Transverse colon (tissue), 4 donors: ENCODE measurements at regions of chr4 and their contacts with region 1.

Region 1: DNA sequence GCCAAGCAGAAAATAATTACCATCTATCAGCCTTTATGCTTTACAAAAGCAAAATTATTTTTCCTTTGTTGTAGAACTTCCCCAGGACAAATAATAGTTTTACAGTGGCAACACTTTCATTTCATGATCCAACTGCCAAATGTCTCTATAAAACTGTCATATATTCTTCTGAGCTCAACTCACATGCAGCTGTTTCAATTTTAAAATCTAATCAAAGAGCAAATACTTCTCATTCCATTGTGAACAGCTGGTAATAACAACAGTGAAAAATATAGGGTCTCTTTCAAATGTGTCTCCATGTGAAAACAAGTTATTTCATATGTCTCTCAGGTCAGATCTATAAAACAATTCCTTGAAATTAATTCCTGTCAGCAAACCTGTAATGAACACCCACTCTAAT is 270.6 kb upstream of the SLC7A11 start:
- DNase-seq: no peak
- H3K4me3 ChIP-seq: no peak overlapping the region
- H3K27ac ChIP-seq: no peak overlapping the region
- H3K4me1 ChIP-seq: no peaks in the 10 kb centered on the region
- H3K27me3 ChIP-seq: no peaks in the 10 kb centered on the region
- CTCF ChIP-seq: no peak
- EP300 ChIP-seq: no peak
- POLR2A ChIP-seq: no peak

Region 2: GRCh38 chr4:138460477-138461414 is 52.0 kb before region 1 on chr4:
- in situ Hi-C with region 1: no loop called
- intact Hi-C with region 1: loop called (anchors 2 kb)
- DNase-seq: no peak
- H3K4me3 ChIP-seq: no peak overlapping the region
- H3K27ac ChIP-seq: peak overlapping the region in 3 of 4 donors; percentile 20 to 49 (median 44)
- H3K4me1 ChIP-seq: peaks cover 0 to 13% (median 6%) of the 10 kb centered on the region in 4 donors
- H3K27me3 ChIP-seq: no peaks in the 10 kb centered on the region
- CTCF ChIP-seq: no peak
- EP300 ChIP-seq: no peak
- POLR2A ChIP-seq: no peak